Colonic mucosa (tissue), 4 donors: ENCODE measurements at regions of chr1 and their contacts with region 1.

Region 1: GRCh38 chr1:96236156-96236739 is 485.3 kb upstream of the PTBP2 start:
- DNase-seq: peak; percentile 18
- H3K4me3 ChIP-seq: no peak overlapping the region
- H3K27ac ChIP-seq: no peak overlapping the region
- H3K4me1 ChIP-seq: no peaks in the 10 kb centered on the region
- H3K27me3 ChIP-seq: no peaks in the 10 kb centered on the region
- CTCF ChIP-seq: peak; percentile 35

Region 2: DNA sequence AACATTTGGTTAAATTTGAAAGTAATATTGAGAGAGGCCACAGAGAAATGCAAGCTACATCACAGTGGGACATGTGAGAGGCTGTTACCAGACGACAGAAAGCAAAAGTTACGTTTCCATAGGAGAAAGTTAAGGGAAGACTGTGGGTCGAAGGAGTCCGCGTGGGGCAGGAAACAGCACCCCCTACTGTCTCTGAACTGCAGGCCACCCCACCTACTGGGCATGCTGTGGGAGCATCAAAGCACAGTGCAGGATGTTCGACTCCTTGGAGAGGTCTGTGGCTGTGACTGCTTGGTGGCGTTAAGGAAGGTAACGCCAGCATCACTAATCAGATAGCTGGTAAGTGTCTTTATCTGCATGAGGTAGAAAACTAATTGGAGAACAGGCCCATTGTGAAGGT is 609.2 kb after region 1 on chr1:
- intact Hi-C with region 1: loop called (anchors 5 kb)
- DNase-seq: peak; percentile 29
- H3K4me3 ChIP-seq: no peak overlapping the region
- H3K27ac ChIP-seq: no peak overlapping the region
- H3K4me1 ChIP-seq: no peaks in the 10 kb centered on the region
- H3K27me3 ChIP-seq: no peaks in the 10 kb centered on the region
- CTCF ChIP-seq: peak; percentile 46